ENCODE measurements at regions of chr9 and their contacts with region 1.

Region 1: DNA sequence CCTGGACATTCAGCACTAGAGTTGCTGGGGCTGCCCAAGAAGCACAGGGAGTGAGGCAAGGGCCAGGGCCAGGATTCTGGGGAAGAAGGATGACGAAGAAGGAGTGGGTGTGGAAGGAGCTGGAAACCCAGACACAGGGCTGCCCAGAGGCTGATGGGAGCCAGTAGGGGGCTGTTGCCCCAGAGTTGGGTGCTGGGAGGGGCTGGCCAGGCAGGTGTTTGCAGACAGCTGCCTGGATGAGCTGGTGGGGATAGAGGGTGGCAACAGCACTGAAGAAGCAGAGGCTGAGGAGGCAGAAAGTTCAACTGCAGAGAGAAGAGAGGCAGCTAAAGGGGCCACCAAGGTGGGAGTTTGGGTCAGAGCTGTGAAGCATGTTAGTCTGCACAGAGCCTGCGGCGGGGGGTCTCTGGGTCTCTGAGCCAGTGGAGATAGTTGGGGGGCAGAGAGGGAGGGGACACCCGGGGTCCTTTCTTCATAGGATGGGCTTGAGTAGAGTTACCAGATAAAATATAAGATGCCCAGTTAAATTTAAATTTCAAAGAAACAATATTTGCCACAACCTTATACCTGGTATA is 2.5 kb upstream of the AQP7 start:
- DNase-seq: no peak
- H3K4me3 ChIP-seq: no peak overlapping the region
- H3K27me3 ChIP-seq: peaks cover 4% of the 10 kb centered on the region; the same call in 1 of the 2 replicates
- CTCF ChIP-seq: no peak

Region 2: GRCh38 chr9:33473643-33474352 is 68.9 kb after region 1 on chr9 and contains the start of gene NOL6:
- CTCF ChIA-PET with region 1: interaction called, 11 read pairs
- POLR2A ChIA-PET with region 1: no interaction called
- DNase-seq: peak; percentile 96
- H3K4me3 ChIP-seq: peak within 1 kb of the TSS; percentile 86
- H3K27me3 ChIP-seq: no peaks in the 10 kb centered on the region
- CTCF ChIP-seq: no peak
- polyA plus RNA-seq, gene NOL6: 23.6 and 39.4 TPM in 2 replicates

Region 3: DNA sequence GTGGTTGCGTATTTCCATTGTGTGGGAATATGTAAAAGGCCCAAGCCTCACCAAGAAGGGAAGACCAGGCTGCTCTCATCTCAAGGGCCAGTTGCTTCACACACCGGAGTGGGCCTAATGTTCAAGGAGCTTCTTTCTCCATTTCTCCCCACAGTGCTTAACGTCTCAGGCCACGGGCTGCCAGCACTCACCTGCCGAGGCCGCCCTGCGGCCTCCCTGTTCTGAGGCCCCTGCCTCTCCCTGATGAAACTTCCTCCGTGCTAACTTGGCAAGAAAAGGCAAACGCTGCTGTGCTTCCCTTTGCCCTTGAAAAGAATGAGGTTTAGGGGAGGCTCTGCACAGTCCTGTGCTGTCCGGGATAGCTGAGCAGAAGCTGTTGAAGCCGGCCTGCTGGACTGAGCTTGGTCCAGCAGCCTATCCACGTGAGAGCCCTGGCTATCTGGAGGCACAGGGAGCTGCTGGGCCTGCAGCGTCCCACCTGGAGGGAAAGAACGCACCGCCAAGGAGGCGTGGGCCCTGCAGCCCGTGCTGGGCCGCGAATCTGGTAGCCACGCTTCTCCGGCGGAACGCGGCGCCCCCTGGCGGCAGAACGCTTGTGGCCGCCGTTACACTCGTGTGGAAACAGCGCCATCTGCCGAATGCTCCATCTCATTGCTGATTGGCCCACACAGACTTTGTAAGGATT is 316.9 kb after region 1 on chr9:
- CTCF ChIA-PET with region 1: interaction called, 12 read pairs
- POLR2A ChIA-PET with region 1: no interaction called
- DNase-seq: no peak
- H3K4me3 ChIP-seq: no peak overlapping the region
- H3K27me3 ChIP-seq: peaks cover 11% of the 10 kb centered on the region
- CTCF ChIP-seq: peak; percentile 100

Region 4: DNA sequence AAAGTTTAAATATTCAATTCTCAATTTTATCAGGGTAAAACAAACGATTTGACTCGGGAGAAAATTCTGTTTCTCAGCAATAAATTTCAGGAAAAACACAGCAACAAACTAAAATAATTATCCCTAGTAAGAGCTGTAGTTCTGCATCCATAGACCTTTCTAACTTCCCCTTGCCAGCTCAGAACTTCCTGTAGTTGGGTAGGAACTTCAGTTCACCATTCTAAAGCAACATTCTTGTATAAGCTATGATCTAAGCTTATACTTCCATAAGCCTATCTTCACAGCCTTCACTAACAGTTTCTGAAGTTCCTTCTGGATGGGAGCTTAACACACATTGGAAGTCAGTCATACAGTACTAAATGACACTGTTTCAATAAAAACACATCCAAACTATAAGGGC is 547.2 kb after region 1 on chr9:
- CTCF ChIA-PET with region 1: no interaction called
- POLR2A ChIA-PET with region 1: no interaction called
- DNase-seq: no peak
- H3K4me3 ChIP-seq: no peak overlapping the region
- H3K27me3 ChIP-seq: no peaks in the 10 kb centered on the region
- CTCF ChIP-seq: no peak